ENCODE measurements at regions of chr7 and their contacts with region 1.

Region 1: GRCh38 chr7:5374464-5374863 is 49.2 kb downstream of the TNRC18 start:
- DNase-seq: no peak
- H3K4me3 ChIP-seq: no peak overlapping the region
- H3K27ac ChIP-seq: no peak overlapping the region
- H3K4me1 ChIP-seq: peaks cover 34% of the 10 kb centered on the region
- H3K27me3 ChIP-seq: no peaks in the 10 kb centered on the region
- CTCF ChIP-seq: no peak
- POLR2A ChIP-seq: no peak

Region 2: DNA sequence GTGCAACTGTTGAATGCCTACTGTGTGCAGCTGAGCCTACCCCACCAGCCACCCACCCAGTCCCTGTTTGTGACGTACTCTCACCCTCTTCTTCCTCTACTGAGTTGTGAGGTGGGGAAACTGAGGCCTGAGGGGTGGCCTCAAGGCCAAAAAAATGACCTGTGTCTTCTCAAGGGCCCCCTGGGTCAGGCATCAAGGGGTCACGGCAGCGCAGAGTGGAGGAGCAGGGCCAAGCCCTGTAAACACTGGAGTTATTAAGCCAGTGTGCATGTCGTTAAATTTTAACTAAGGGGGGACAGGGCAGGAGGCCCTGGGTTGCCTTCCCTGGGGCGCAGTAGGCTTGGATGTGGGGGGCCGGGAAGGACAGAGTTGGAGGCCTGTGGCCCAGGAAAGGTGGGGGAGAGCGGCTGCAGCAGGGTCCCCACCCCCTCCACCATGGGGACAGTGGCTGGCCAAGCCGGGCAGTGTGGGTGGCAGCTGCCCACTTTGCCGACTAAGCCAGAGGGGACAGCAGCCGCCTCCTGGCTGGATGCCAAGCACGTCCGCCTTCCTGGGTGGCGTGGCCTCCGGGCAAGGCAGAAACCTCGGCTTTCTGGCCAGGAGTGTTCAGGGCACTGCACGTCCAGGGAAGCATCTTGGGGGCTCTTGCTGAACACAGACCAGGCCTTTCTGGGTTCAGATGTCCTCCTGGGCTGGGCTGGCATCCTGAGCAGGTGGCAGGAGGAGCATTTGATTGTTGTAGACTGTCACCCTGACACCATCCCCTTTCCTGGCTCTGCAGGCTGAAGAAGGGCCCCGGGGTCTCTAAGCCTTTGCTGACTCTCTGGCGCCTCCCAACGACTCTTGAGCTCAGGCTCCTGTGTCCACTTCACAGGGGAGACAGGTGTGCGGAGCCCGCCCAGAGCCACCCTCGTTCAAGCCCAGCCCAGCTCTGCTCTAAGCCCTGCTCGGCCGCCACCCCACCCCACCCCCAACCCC is 89.9 kb before region 1 on chr7:
- intact Hi-C with region 1: no loop called
- DNase-seq: no peak
- H3K4me3 ChIP-seq: no peak overlapping the region
- H3K27ac ChIP-seq: no peak overlapping the region
- H3K4me1 ChIP-seq: peaks cover 14% of the 10 kb centered on the region
- H3K27me3 ChIP-seq: no peaks in the 10 kb centered on the region
- CTCF ChIP-seq: no peak
- POLR2A ChIP-seq: no peak

Region 3: DNA sequence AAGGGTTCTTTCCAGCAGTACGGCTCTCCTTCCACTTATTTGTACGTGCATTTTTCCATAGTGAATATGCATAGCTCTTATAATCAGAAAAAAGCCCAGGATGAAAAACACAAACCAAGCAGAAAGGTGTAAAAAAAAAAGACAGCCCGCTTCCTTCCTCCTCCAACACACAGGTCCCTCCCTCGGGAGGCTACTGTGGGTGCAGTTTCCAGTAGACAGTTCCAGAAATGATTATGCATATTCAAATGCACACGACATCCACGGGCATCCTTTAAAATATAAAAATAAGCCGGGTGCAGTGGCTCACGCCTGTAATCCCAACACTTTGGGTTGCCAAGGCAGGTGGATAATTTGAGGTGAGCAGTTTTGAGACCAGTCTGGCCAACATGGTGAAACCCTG is 10.7 kb before region 1 on chr7:
- intact Hi-C with region 1: loop called (anchors 1 kb)
- DNase-seq: no peak
- H3K4me3 ChIP-seq: no peak overlapping the region
- H3K27ac ChIP-seq: no peak overlapping the region
- H3K4me1 ChIP-seq: peaks cover 23% of the 10 kb centered on the region
- H3K27me3 ChIP-seq: no peaks in the 10 kb centered on the region
- CTCF ChIP-seq: no peak
- POLR2A ChIP-seq: no peak

Measured in vagina (tissue), 2 donors.